ENCODE measurements at regions of chr15 and their contacts with region 1.

Region 1: GRCh38 chr15:90818251-90819210 is 49.9 kb upstream of the FURIN start:
- DNase-seq: no peak
- H3K4me3 ChIP-seq: no peak overlapping the region
- CTCF ChIP-seq: no peak
- POLR2A ChIP-seq: no peak

Region 2: GRCh38 chr15:91068966-91069365 is 250.4 kb after region 1 on chr15:
- intact Hi-C with region 1: loop called (anchors 5 kb)
- DNase-seq: no peak
- H3K4me3 ChIP-seq: no peak overlapping the region
- CTCF ChIP-seq: no peak
- POLR2A ChIP-seq: no peak

Measured in lower leg skin (tissue), 4 donors.